ENCODE measurements at regions of chr19 and their contacts with region 1.

Region 1: DNA sequence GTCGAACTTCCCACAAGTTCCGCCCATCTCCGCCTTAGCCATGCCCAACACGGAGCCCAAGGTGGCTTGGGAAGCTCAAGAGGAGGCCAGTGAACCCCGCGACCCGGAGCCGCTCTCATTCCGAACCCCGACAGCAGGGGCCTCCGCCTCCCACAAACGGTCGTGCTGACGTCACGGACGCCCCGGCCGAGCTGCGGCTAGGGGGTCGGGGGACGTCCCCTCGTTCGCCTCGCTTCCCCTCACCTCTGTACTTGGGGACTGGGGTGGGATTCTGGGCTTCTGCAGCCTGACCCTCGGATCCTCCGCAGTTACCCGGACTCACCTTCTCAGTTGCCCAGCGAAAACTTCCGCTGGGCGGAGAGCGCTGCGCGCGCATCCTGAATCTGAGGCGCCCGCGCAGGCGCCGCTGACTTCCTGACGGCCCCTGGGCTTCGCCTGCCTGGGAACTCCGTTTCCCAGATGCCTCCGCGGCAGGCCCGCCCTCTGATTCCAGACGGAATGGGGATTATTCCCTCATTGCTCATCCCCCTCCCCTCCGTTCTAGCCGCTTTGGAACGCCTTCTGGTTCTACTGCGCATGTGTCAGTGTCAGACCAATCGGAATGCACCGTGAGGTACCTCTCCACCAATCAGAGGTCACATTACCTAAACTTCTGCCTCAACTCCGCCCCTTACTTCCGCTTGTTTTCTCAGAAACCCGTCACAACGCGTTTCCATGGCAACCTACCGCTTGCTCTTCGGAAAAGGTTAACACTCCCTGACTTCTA is at the start of gene VRK3:
- DNase-seq: peak; percentile 100
- ATAC-seq: peak; percentile 94
- H3K4me3 ChIP-seq: peak within 1 kb of the TSS; percentile 87
- H3K27ac ChIP-seq: peak within 1 kb of the TSS; percentile 83
- H3K4me1 ChIP-seq: no peaks in the 10 kb centered on the region
- H3K27me3 ChIP-seq: no peaks in the 10 kb centered on the region
- CTCF ChIP-seq: peak; percentile 11; the same call in 1 of the 2 replicates
- POLR2A ChIP-seq: peak; percentile 83
- RAD21 ChIP-seq: no peak
- total RNA-seq, gene VRK3: 20.6 and 28.7 TPM in 2 replicates

Region 2: DNA sequence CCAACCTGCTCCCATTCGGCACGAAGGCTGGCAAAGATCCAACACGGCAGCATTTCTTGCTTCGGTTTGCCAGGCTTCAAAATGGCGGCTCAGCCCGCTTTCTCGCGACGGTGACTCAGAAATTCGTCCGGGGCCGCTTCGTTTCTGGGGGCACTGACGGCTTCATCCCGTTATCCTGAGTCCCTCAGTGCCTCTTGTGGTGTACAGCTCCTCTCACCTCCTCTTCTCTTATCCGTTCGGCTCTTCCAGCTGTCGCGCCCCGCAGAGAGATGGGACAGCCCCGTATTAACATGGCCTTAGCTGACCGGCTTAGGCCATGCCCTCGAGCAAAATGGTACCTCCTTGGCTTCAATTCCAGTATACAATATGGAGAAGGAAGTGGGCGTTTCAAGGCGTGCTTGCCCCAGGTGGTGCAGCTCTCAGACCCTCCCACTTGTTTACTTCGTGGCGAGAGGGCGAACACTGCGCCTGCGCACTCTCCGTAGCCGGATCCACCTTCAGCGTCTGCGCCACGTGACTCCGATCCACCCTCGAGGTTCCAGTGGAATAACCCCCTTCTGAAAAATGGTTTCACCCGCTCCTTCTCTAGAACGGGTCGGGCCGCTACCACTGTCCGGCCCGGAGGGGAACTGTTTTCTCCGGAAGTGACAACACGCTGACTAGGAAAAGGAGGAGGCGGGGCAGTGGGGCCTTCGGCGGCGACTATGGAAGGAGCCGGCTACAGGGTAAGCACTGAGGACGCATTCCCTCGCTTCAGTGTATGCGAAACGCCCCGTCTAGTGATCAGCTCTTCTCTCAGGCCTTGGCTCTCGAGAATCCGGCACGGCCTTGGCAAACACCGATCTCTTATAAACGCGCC is 148.0 kb before region 1 on chr19 and contains the starts of genes AKT1S1 and TBC1D17:
- CTCF ChIA-PET with region 1: no interaction called
- POLR2A ChIA-PET with region 1: no interaction called
- dilution Hi-C with region 1: no loop called
- in situ Hi-C with region 1: no loop called
- intact Hi-C with region 1: loop called (anchors 5 kb)
- DNase-seq: peak; percentile 100
- ATAC-seq: peak; percentile 68
- H3K4me3 ChIP-seq: peak within 1 kb of the TSS; percentile 63
- H3K27ac ChIP-seq: peak within 1 kb of the TSS; percentile 97
- H3K4me1 ChIP-seq: peaks cover 7% of the 10 kb centered on the region
- H3K27me3 ChIP-seq: no peaks in the 10 kb centered on the region
- CTCF ChIP-seq: no peak
- POLR2A ChIP-seq: peak; percentile 94
- RAD21 ChIP-seq: no peak
- total RNA-seq, gene AKT1S1: 3.6 and 5.0 TPM in 2 replicates
- total RNA-seq, gene TBC1D17: 1.1 and 1.4 TPM in 2 replicates

Region 3: DNA sequence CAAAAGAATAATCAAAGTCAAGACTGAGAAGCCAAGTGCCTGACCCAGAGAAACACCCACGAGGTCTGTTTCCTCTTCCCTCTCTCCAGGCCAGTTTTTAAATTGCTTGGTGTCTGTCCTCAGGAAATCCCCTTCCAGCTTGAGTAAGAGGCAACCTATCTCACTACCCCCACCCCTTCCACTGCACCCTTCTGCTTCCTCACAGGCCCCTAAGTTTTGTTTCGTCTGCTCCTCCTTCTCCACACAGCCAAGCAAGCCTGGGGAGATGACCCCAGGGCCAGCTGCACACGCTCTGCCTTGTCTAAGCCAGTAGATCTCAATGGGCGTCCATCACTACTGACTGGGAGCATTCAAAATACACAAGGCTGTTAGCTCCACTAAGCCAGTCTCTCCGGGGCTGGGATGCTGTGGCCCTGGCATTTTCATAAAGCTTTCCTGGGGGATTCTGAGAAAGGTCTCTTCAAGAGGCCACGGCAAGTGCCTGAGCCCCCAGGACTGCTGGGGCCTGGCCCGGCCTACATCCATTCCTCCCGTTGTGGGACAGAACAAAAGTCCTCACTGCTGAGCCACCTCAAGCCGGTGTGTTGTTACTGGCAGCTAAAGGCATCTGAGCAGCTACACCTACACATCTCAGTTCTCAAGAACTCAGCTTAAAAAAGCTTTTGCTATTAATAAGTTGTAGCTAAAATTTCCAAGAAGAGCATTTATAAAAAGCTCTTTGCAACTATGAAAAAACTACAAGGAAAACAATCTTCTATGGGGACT is 113.6 kb before region 1 on chr19:
- CTCF ChIA-PET with region 1: no interaction called
- POLR2A ChIA-PET with region 1: no interaction called
- dilution Hi-C with region 1: no loop called
- in situ Hi-C with region 1: no loop called
- intact Hi-C with region 1: no loop called
- DNase-seq: peak; percentile 52
- ATAC-seq: no peak
- H3K4me3 ChIP-seq: no peak overlapping the region
- H3K27ac ChIP-seq: no peak overlapping the region
- H3K4me1 ChIP-seq: peaks cover 3% of the 10 kb centered on the region
- H3K27me3 ChIP-seq: no peaks in the 10 kb centered on the region
- CTCF ChIP-seq: no peak
- POLR2A ChIP-seq: no peak
- RAD21 ChIP-seq: no peak

Region 4: GRCh38 chr19:49997709-49998108 is 27.5 kb before region 1 on chr19:
- CTCF ChIA-PET with region 1: no interaction called
- POLR2A ChIA-PET with region 1: no interaction called
- dilution Hi-C with region 1: no loop called
- in situ Hi-C with region 1: no loop called
- intact Hi-C with region 1: no loop called
- DNase-seq: peak; percentile 13
- ATAC-seq: peak; percentile 37; the same call in 1 of the 2 replicates
- H3K4me3 ChIP-seq: no peak overlapping the region
- H3K27ac ChIP-seq: no peak overlapping the region
- H3K4me1 ChIP-seq: no peaks in the 10 kb centered on the region
- H3K27me3 ChIP-seq: no peaks in the 10 kb centered on the region
- CTCF ChIP-seq: no peak
- POLR2A ChIP-seq: no peak
- RAD21 ChIP-seq: no peak

Measured in IMR-90 (cell line).